Gastrocnemius medialis (tissue), 4 donors: ENCODE measurements at regions of chr17 and their contacts with region 1.

Region 1: DNA sequence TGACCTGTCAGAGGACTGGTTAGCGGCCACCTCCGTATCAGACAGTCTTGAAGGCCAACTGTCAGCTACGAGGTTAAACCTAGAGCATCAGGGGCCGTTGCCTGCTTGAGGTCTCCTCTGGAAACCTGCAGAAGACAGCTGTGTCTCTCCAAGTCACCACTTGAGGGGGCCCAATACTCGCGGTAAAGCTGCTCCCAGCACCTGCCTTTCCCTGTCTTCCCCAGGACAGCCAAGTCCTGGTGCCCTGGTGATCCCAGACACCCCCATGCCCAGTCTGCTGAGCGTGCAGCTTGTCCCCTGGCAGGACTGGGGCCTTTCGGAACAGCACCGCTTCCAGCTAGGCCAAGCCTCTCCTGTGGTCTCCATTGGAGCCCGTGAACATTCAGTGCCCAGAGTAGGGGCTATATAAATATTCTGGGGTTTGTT is 80.1 kb downstream of the DNAH17 start:
- DNase-seq: peak; percentile 73 to 76
- ATAC-seq: peak; percentile 93 to 97
- H3K4me3 ChIP-seq: no peak overlapping the region
- H3K27ac ChIP-seq: no peak overlapping the region
- H3K4me1 ChIP-seq: no peaks in the 10 kb centered on the region
- H3K27me3 ChIP-seq: peaks cover 0 to 5% (median 0%) of the 10 kb centered on the region in 3 donors
- CTCF ChIP-seq: peak; percentile 71 to 83 (median 79)
- POLR2A ChIP-seq: no peak

Region 2: DNA sequence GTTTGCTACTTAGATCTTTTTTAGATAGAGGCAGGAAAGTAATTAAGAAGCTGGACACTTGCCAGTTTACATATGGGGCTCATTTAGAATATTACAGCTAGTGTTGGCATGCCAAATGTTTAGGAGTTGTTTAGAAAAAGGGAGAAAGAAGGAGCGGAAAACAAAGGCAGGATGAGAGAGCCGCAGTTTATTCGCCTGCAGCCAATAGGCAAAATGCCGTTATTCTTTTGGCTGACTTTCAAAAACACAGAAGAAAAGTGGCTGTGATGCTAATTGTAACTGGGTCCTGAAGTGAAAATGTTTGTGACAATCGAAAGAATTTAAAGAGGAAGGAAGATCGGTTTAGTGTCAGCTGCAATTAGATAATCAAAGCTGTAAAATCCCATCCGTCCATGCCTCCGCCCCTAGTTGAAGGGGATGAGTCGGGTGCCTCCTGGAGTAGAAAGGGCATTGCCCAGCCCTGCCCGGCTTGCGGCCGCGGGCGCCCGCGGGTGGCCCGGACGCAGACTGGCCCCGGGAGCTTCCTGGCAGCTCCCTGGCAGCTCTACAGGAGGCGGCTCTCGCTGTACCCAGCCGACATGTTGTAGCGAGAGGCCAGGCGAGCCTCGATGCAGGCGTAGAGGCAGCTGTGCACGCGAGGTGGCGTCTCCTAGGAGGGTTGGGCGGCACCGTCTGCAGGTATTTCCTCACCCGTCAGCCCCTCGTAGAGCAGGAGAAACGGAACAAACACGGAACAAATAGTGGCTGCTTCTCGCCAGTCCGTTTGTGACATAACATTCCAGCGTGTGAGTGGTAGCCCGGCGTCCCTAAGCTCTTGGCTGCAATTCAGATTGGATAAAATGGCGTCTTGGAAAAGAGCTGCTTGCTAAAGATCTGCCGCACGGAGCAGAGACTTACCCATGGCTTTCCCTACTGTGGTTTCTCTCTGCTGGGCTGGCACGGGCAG is 456.4 kb before region 1 on chr17:
- in situ Hi-C with region 1: no loop called
- intact Hi-C with region 1: no loop called
- DNase-seq: peak; percentile 57 to 83
- ATAC-seq: peak; percentile 78 to 81
- H3K4me3 ChIP-seq: peak overlapping the region; percentile 54 to 74 (median 67)
- H3K27ac ChIP-seq: peak overlapping the region; percentile 91 to 94 (median 92)
- H3K4me1 ChIP-seq: peaks cover 53 to 61% of the 10 kb centered on the region in 2 donors
- H3K27me3 ChIP-seq: no peaks in the 10 kb centered on the region
- CTCF ChIP-seq: peak in 2 of 5 experiments; percentile 24 to 30
- POLR2A ChIP-seq: peak; percentile 11 to 54

Region 3: DNA sequence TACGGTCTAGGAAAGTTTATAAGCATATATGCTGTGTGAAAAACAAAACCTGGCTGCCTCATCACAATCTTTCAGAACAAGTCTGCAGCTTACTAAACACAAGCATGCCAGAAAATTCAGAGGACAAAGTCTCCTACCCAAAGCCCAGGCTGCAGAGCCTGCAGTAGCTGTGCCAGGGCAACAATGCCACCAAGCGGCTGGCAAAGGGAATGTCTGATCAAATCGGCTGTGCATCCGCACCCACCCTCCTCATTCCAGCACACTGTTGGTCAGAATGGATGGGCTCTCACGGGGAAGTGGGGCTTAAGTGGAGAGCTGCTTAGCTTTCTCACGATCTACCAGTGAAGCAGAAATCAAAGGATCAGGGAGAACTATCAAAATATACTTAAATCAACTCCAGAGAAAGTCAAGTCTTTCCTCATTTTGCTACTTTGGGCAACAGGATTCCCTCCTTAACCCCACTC is 211.4 kb after region 1 on chr17:
- in situ Hi-C with region 1: loop called (anchors 5 to 10 kb)
- intact Hi-C with region 1: loop called (anchors 1 kb)
- DNase-seq: peak; percentile 52 to 68
- ATAC-seq: peak; percentile 86 to 93
- H3K4me3 ChIP-seq: no peak overlapping the region
- H3K27ac ChIP-seq: peak overlapping the region in 2 of 4 donors; percentile 3 to 6
- H3K4me1 ChIP-seq: peaks cover 13 to 28% of the 10 kb centered on the region in 2 donors
- H3K27me3 ChIP-seq: no peaks in the 10 kb centered on the region
- CTCF ChIP-seq: peak; percentile 73 to 89 (median 83)
- POLR2A ChIP-seq: no peak

Region 4: GRCh38 chr17:78745407-78746088 is 248.4 kb after region 1 on chr17:
- in situ Hi-C with region 1: no loop called
- intact Hi-C with region 1: loop called (anchors 5 kb)
- DNase-seq: no peak
- ATAC-seq: no peak
- H3K4me3 ChIP-seq: no peak overlapping the region
- H3K27ac ChIP-seq: peak overlapping the region; percentile 61 to 79 (median 64)
- H3K4me1 ChIP-seq: peaks cover 59 to 63% of the 10 kb centered on the region in 2 donors
- H3K27me3 ChIP-seq: no peaks in the 10 kb centered on the region
- CTCF ChIP-seq: peak; percentile 36 to 61 (median 57)
- POLR2A ChIP-seq: no peak

Region 5: GRCh38 chr17:78798695-78799559 is 301.8 kb after region 1 on chr17:
- in situ Hi-C with region 1: loop called (anchors 10 to 25 kb)
- intact Hi-C with region 1: loop called (anchors 1 kb)
- DNase-seq: no peak
- ATAC-seq: peak; percentile 46 to 72
- H3K4me3 ChIP-seq: no peak overlapping the region
- H3K27ac ChIP-seq: peak overlapping the region in 3 of 4 donors; percentile 17 to 39 (median 32)
- H3K4me1 ChIP-seq: peaks cover 28 to 32% of the 10 kb centered on the region in 2 donors
- H3K27me3 ChIP-seq: no peaks in the 10 kb centered on the region
- CTCF ChIP-seq: peak; percentile 41 to 67 (median 61)
- POLR2A ChIP-seq: no peak

Region 6: GRCh38 chr17:78806451-78806850 is 309.3 kb after region 1 on chr17:
- in situ Hi-C with region 1: loop called (anchors 10 to 25 kb)
- intact Hi-C with region 1: no loop called
- DNase-seq: no peak
- ATAC-seq: no peak
- H3K4me3 ChIP-seq: no peak overlapping the region
- H3K27ac ChIP-seq: peak overlapping the region in 2 of 4 donors; percentile 27 to 57
- H3K4me1 ChIP-seq: peaks cover 0 to 3% of the 10 kb centered on the region in 2 donors
- H3K27me3 ChIP-seq: no peaks in the 10 kb centered on the region
- CTCF ChIP-seq: no peak
- POLR2A ChIP-seq: no peak

Region 7: DNA sequence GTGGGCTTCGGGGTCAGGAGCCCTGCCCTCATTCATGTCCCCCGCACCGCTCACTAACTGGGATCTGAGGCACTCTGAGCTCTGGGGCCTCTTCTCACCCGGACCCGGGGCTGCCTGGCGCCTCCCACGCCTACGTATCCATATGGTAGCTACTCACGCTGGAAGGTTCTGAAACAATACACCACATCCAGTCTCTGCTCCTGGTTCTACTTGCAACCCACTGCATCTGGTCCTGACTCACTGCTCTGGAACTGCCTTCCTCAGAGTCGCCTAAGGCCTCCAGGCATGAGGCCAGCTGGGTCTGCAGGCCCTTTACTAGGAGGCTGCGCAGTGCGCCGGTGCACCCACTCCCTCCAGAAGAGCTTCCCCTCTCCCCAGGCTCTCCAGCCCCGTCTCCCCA is 325.4 kb after region 1 on chr17:
- in situ Hi-C with region 1: loop called in 2 of 4 experiments (anchors 25 kb)
- intact Hi-C with region 1: no loop called
- DNase-seq: no peak
- ATAC-seq: no peak
- H3K4me3 ChIP-seq: no peak overlapping the region
- H3K27ac ChIP-seq: no peak overlapping the region
- H3K4me1 ChIP-seq: no peaks in the 10 kb centered on the region
- H3K27me3 ChIP-seq: no peaks in the 10 kb centered on the region
- CTCF ChIP-seq: no peak
- POLR2A ChIP-seq: no peak

Region 8: DNA sequence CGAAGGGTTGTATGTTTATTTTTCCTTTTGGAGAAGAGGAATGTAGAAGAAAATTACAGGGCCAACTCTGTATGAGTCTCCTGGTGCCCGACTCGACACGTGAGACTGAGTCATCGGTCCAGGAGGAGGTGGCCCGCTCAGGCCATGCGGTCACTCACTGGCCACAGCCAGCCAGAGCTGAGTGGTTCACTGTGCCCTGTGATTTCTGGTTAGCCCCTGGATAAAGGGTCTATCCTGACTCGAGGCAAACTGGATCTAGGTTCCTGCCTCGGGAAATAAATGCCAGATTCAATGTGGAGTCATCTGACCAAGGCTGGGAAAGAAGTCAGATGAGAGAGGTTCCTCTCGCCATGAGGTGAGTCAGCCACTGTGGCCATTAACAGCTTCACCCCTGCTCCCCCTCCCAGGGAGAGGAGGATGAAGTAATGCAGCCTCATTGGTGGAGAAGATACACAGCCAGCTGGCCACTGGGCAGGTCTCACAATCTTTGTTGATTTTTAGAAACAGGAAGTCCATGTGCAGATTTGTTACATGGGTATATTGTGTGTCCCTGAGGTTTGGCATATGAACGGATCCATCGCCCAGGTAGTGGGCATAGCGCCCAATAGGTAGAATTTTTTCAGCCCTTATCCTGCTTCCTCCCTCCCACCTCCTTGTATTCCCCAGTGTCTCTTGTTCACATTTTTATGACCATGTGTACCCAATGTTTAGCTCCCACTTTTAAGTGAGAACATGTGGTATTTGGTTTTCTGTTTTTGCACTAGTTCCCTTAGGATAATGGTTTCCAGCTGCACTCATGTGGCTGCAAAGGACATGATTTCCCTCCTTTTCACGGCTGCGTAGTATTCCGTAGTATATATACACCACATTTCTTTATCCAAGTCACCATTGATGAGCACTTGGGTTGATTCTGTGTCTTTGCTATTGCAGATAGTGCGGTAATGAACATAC is 365.2 kb after region 1 on chr17:
- in situ Hi-C with region 1: no loop called
- intact Hi-C with region 1: no loop called
- DNase-seq: peak; percentile 82 to 85
- ATAC-seq: peak; percentile 87 to 92
- H3K4me3 ChIP-seq: no peak overlapping the region
- H3K27ac ChIP-seq: peak overlapping the region; percentile 76 to 82 (median 78)
- H3K4me1 ChIP-seq: peaks cover 0 to 4% of the 10 kb centered on the region in 2 donors
- H3K27me3 ChIP-seq: no peaks in the 10 kb centered on the region
- CTCF ChIP-seq: no peak
- POLR2A ChIP-seq: peak; percentile 47 to 67

Region 9: DNA sequence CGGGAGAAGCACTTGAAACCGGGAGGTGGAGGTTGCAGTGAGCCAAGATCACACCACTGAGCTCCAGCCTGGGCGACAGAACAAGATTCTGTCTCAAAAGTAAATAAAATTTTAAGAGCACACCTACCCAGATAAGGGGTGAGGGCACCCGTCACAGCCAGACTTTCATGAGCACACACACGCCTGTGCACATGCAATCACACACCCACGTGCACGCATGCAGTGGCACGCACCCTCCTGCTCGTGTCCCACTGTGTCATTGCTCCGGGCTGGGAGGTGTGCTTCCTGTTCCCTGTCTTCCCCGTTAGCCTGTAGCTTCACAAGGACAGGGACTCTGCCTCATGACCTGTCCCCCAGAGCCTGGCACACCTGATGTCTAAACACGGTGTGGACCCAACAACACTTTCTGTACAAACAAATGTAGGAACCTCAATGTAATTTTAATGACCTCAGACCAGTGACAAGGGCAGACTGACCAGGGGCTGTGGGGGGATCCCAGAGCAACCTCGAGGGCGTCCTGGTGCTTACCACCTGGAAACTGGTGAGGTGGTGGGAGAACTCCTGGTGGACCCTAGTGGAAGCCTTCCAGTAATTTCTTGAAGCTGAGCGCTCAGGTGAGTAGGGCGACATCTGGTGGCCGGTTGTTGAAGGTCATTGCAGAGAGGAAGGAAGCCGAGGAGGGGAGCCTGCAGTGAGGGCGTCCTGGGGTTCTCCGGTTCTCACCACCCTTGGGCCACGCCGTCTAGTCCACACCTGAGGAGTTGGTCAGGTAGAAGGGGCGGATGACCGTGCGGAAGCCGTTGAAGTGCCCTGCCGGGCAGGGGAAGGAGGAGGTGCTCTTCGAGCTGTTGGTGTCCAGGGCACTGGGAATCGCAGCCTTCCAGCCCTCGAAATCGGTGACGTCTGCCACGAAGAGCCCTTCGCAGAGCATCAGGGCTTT is 474.0 kb after region 1 on chr17:
- in situ Hi-C with region 1: no loop called
- intact Hi-C with region 1: loop called (anchors 10 kb)
- DNase-seq: peak; percentile 53 to 69
- ATAC-seq: peak; percentile 31 to 47
- H3K4me3 ChIP-seq: no peak overlapping the region
- H3K27ac ChIP-seq: peak overlapping the region in 1 of 4 donors; percentile 7
- H3K4me1 ChIP-seq: peaks cover 4 to 14% of the 10 kb centered on the region in 2 donors
- H3K27me3 ChIP-seq: no peaks in the 10 kb centered on the region
- CTCF ChIP-seq: peak; percentile 74 to 93 (median 93)
- POLR2A ChIP-seq: no peak